ENCODE measurements at regions of chr3 and their contacts with region 1.

Region 1: GRCh38 chr3:63818281-63819150 is 583 bp upstream of the C3orf49 start:
- DNase-seq: peak; percentile 19
- ATAC-seq: peak; percentile 87
- H3K4me3 ChIP-seq: no peak overlapping the region
- H3K27ac ChIP-seq: no peak overlapping the region
- H3K4me1 ChIP-seq: no peaks in the 10 kb centered on the region
- H3K27me3 ChIP-seq: no peaks in the 10 kb centered on the region
- CTCF ChIP-seq: peak; percentile 70 to 84 (median 80)
- EP300 ChIP-seq: no peak
- POLR2A ChIP-seq: no peak
- RAD21 ChIP-seq: peak; percentile 85

Region 2: GRCh38 chr3:62622553-62623193 is 1195.8 kb before region 1 on chr3:
- CTCF ChIA-PET with region 1: interaction called, 7 read pairs
- POLR2A ChIA-PET with region 1: no interaction called
- RAD21 ChIA-PET with region 1: no interaction called
- SMC1A ChIA-PET with region 1: no interaction called
- in situ Hi-C with region 1: loop called (anchors 25 kb)
- intact Hi-C with region 1: loop called (anchors 5 kb)
- DNase-seq: peak; percentile 1
- ATAC-seq: peak; percentile 72
- H3K4me3 ChIP-seq: no peak overlapping the region
- H3K27ac ChIP-seq: no peak overlapping the region
- H3K4me1 ChIP-seq: no peaks in the 10 kb centered on the region; the same call in 1 of the 2 replicates
- H3K27me3 ChIP-seq: no peaks in the 10 kb centered on the region
- CTCF ChIP-seq: peak; percentile 53 to 68 (median 56)
- EP300 ChIP-seq: no peak
- POLR2A ChIP-seq: no peak
- RAD21 ChIP-seq: peak; percentile 74

Region 3: GRCh38 chr3:63344661-63345060 is 473.9 kb before region 1 on chr3:
- CTCF ChIA-PET with region 1: interaction called, 144 read pairs
- POLR2A ChIA-PET with region 1: no interaction called
- RAD21 ChIA-PET with region 1: interaction called, 41 read pairs
- SMC1A ChIA-PET with region 1: interaction called, 53 read pairs
- in situ Hi-C with region 1: no loop called
- intact Hi-C with region 1: no loop called
- DNase-seq: no peak
- ATAC-seq: no peak
- H3K4me3 ChIP-seq: no peak overlapping the region
- H3K27ac ChIP-seq: no peak overlapping the region
- H3K4me1 ChIP-seq: no peaks in the 10 kb centered on the region
- H3K27me3 ChIP-seq: no peaks in the 10 kb centered on the region
- CTCF ChIP-seq: no peak
- EP300 ChIP-seq: no peak
- POLR2A ChIP-seq: no peak
- RAD21 ChIP-seq: no peak

Region 4: DNA sequence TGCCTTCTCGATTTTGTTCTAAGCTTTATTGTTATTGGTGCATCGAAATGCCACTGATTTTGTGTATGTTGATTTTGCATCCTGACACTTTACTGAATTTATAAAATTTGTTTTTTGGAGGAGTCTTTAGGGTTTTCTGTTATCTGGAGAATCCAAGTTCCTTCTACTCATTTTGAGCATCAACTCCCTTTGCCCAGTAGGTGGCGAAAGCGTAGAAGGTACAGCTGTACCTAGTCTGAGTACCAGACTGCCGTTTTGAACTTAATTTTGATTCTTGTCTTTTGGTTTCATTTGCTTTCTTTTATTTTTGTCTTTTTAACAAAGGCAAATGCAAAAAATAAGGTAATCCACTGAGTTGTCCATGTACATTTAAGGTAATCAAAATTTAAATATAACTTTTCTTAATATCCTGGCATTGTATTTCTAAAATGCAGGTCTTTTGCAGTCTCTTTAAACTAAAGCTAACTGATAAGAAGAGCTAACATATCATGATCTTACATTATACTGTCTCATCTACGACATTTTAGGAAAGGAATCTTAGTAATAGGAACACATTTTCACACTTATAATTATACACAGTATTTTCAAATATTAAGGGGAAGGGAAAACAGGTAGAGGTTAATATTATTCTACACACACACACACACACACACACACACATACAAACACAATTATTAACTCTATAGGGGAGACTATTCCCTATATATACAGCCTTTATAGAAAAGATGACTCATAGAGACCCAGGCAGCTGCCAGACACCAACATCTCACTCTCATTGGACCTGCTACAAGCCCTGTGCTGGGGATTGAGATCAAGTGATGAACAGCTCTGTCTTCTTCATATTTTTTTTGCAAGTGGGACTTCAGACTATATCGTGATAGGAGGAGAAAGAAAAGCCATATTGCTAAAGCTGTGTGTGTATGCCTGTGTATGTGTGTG is 468.7 kb before region 1 on chr3:
- CTCF ChIA-PET with region 1: interaction called, 144 read pairs
- POLR2A ChIA-PET with region 1: no interaction called
- RAD21 ChIA-PET with region 1: interaction called, 41 read pairs
- SMC1A ChIA-PET with region 1: interaction called, 53 read pairs
- in situ Hi-C with region 1: loop called (anchors 5 kb)
- intact Hi-C with region 1: loop called (anchors 1 kb)
- DNase-seq: no peak
- ATAC-seq: peak; percentile 87
- H3K4me3 ChIP-seq: no peak overlapping the region
- H3K27ac ChIP-seq: no peak overlapping the region
- H3K4me1 ChIP-seq: no peaks in the 10 kb centered on the region
- H3K27me3 ChIP-seq: no peaks in the 10 kb centered on the region
- CTCF ChIP-seq: peak; percentile 62 to 69 (median 69)
- EP300 ChIP-seq: no peak
- POLR2A ChIP-seq: no peak
- RAD21 ChIP-seq: peak; percentile 73

Region 5: DNA sequence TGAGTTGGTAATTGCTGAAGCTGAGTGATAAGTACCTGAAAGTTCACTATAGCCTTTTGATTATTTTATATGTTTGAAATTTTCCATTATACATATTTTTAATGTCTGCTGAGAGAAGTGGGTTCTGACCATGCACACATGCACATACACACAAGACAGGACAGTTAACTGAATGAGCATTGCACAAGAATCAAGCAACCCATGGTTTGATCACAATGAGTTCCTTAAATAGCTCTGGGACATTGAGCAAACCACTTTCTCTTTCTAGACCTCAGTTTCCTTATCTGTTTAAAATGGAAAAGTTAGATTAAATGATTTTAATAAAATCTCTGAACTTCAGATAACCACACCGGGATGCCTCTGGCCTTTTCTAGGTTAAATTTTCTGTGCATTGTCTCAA is 139.3 kb before region 1 on chr3:
- CTCF ChIA-PET with region 1: no interaction called
- POLR2A ChIA-PET with region 1: no interaction called
- RAD21 ChIA-PET with region 1: no interaction called
- SMC1A ChIA-PET with region 1: no interaction called
- in situ Hi-C with region 1: no loop called
- intact Hi-C with region 1: loop called (anchors 10 kb)
- DNase-seq: no peak
- ATAC-seq: no peak
- H3K4me3 ChIP-seq: no peak overlapping the region
- H3K27ac ChIP-seq: no peak overlapping the region
- H3K4me1 ChIP-seq: no peaks in the 10 kb centered on the region
- H3K27me3 ChIP-seq: no peaks in the 10 kb centered on the region
- CTCF ChIP-seq: no peak
- EP300 ChIP-seq: no peak
- POLR2A ChIP-seq: no peak
- RAD21 ChIP-seq: no peak

Region 6: GRCh38 chr3:63832395-63832794 is 13.9 kb after region 1 on chr3:
- CTCF ChIA-PET with region 1: interaction called, 17 read pairs
- POLR2A ChIA-PET with region 1: no interaction called
- RAD21 ChIA-PET with region 1: interaction called, 3 read pairs
- SMC1A ChIA-PET with region 1: interaction called, 4 read pairs
- in situ Hi-C with region 1: no loop called
- intact Hi-C with region 1: no loop called
- DNase-seq: no peak
- ATAC-seq: no peak
- H3K4me3 ChIP-seq: no peak overlapping the region
- H3K27ac ChIP-seq: no peak overlapping the region
- H3K4me1 ChIP-seq: no peaks in the 10 kb centered on the region
- H3K27me3 ChIP-seq: no peaks in the 10 kb centered on the region
- CTCF ChIP-seq: no peak
- EP300 ChIP-seq: no peak
- POLR2A ChIP-seq: no peak
- RAD21 ChIP-seq: no peak